ENCODE measurements at regions of chr2 and their contacts with region 1.

Region 1: GRCh38 chr2:158034199-158034866 is 67.3 kb upstream of the UPP2 start:
- DNase-seq: no peak
- H3K4me3 Mint-ChIP-seq: no peak overlapping the region
- H3K27ac Mint-ChIP-seq: no peak overlapping the region
- H3K4me1 Mint-ChIP-seq: no peaks in the 10 kb centered on the region
- H3K27me3 Mint-ChIP-seq: peaks cover 15% of the 10 kb centered on the region

Region 2: DNA sequence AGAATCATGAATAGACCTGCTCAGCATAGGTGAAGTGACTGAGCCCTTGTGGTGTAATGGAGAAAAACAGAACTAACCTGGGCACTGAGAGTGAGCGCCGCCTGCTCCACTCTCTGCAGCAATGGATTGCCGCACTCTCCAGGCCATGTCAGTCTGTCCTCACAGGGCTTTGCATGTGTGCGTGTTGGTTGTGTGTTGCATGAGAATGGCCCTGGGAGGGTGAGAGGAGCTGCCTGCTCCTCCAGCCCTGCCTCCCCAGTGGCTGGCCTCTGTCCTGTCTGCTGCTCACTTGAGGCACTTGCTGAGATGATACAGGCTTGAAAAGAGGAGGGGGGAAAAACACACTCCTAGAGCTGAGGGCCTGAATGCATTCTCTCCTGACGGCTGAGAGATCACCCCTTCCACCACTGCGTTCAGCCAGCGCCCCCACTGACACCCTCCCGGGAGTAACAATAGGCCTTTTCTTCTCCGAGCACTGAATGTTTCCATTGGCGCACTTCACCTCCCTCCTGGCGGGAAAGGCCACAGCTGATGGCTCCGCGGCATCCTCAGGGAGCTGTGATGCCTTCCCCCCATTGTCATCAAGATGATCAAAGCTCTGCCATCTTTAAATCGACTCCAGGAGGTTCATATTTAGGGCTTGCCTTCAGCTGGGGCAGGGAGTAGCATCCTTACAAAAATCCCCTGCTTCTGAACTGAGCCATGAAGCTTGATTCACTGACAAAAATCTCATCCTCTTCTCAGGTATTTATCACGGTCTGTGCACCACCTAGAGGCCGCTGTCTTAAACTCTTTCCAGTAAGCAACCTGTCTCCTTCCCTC is 710.9 kb after region 1 on chr2:
- CTCF ChIA-PET with region 1: interaction called, 13 read pairs
- POLR2A ChIA-PET with region 1: no interaction called
- intact Hi-C with region 1: no loop called
- DNase-seq: peak; percentile 55
- H3K4me3 Mint-ChIP-seq: no peak overlapping the region
- H3K27ac Mint-ChIP-seq: no peak overlapping the region
- H3K4me1 Mint-ChIP-seq: no peaks in the 10 kb centered on the region
- H3K27me3 Mint-ChIP-seq: peaks cover 25% of the 10 kb centered on the region

Measured in activated CD4-positive, alpha-beta memory T cell treated with anti-CD3 and anti-CD28 coated beads for 36 hours (primary cell).